ENCODE measurements at regions of chr1 and their contacts with region 1.

Region 1: DNA sequence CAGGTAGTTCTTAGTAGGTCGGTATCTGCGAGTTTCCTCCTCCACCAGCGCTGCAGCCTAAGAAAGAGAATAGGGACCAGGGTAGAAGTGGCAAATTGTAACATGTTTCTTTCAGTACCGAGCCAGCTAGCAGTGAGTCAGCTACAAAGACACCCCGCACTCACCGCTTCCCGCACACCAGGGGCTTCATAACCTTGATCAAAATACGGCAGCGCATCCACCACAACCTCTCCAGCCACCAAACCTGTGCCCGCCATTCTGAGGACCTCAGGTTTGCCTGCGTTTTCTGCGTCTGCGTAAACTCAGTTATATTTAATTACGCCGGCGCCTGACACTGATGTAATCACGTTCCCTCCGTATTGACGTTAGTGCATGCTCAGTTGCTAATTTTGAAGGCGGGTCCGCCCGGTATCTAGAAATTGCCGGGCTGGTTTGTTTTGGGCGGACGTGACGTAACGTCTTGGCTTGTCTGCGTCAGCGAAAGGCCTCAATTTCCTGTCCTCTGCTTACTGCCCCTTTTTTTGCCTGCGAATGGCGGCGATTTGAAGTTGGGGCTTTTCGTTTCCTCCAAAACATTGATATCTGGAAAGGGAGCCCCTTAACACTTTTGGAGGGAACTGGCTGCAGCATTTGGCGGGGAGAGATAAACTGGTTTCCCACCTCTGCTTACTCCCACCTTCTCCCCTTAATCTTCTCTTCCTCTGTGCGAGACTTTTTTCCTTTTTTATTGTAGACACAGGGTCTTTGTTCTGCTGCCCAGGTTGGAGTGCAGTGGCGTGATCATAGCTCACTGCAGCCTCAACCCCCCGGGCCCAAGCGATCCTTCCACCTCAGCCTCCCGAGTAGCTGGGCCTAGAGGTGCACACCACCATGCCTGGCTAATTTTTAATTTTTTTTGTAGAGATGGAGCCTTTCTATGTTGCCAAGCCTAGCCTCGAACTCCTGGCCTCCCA is at the start of gene BCAS2:
- DNase-seq: peak; percentile 98
- H3K4me3 Mint-ChIP-seq: peak within 1 kb of the TSS; percentile 85
- H3K27ac Mint-ChIP-seq: peak within 1 kb of the TSS; percentile 83
- H3K4me1 Mint-ChIP-seq: peaks cover 29% of the 10 kb centered on the region
- H3K27me3 Mint-ChIP-seq: no peaks in the 10 kb centered on the region
- total RNA-seq, gene BCAS2: 48.5 to 49.0 TPM

Region 2: GRCh38 chr1:114467488-114467887 is 114.1 kb before region 1 on chr1:
- CTCF ChIA-PET with region 1: no interaction called
- POLR2A ChIA-PET with region 1: no interaction called
- intact Hi-C with region 1: loop called (anchors 5 kb)
- DNase-seq: no peak
- H3K4me3 Mint-ChIP-seq: no peak overlapping the region
- H3K27ac Mint-ChIP-seq: peak overlapping the region; percentile 59
- H3K4me1 Mint-ChIP-seq: peaks cover 52% of the 10 kb centered on the region
- H3K27me3 Mint-ChIP-seq: no peaks in the 10 kb centered on the region

Region 3: GRCh38 chr1:114670083-114671010 is 88.7 kb after region 1 on chr1:
- CTCF ChIA-PET with region 1: no interaction called
- POLR2A ChIA-PET with region 1: no interaction called
- intact Hi-C with region 1: loop called (anchors 1 kb)
- DNase-seq: peak; percentile 92
- H3K4me3 Mint-ChIP-seq: peak overlapping the region; percentile 88
- H3K27ac Mint-ChIP-seq: no peak overlapping the region
- H3K4me1 Mint-ChIP-seq: peaks cover 7% of the 10 kb centered on the region
- H3K27me3 Mint-ChIP-seq: peaks cover 2% of the 10 kb centered on the region

Region 4: GRCh38 chr1:114780344-114781226 is 199.0 kb after region 1 on chr1 and contains the start of gene SIKE1:
- CTCF ChIA-PET with region 1: no interaction called
- POLR2A ChIA-PET with region 1: no interaction called
- intact Hi-C with region 1: loop called (anchors 1 kb)
- DNase-seq: peak; percentile 97
- H3K4me3 Mint-ChIP-seq: peak within 1 kb of the TSS; percentile 100
- H3K27ac Mint-ChIP-seq: peak within 1 kb of the TSS; percentile 100
- H3K4me1 Mint-ChIP-seq: peaks cover 23% of the 10 kb centered on the region
- H3K27me3 Mint-ChIP-seq: no peaks in the 10 kb centered on the region
- total RNA-seq, gene SIKE1: 60.4 to 66.7 TPM

Region 5: DNA sequence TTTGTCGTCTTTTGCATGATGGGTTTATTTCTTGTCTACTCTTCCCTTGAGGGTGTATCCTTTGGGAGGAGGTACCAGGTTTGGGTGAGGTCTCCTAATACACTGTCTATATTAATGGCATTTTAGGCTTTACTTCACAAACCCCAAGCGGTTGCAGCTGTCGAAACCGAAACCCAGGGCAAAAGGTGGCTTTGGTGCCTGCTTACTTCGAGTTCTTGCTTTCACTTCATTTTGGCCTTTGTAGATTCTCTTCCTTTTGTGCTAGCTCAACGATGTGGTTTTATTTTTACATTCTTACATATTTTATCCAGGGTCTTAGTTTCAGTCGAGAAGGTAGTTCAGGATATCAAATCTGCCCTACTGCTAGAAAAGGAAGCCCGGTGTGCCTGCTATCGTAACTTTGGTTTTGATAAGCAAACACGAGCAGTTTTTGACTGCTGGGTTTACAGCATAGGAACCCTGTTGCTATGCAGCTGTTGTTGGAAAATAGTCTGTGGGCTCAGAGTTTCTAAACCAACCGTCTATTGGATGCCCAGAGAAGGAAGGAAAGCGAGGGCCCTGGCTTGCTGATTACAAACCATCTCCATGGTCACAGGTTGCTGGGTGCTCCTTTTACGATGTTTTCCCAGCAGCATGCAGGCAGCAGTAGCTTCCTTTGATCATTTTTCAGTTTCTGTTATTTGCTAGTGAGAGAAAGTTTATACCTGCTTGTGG is 517.5 kb after region 1 on chr1:
- CTCF ChIA-PET with region 1: no interaction called
- POLR2A ChIA-PET with region 1: no interaction called
- intact Hi-C with region 1: loop called (anchors 10 kb)
- DNase-seq: peak; percentile 78
- H3K4me3 Mint-ChIP-seq: peak overlapping the region; percentile 80
- H3K27ac Mint-ChIP-seq: peak overlapping the region; percentile 85
- H3K4me1 Mint-ChIP-seq: peaks cover 47% of the 10 kb centered on the region
- H3K27me3 Mint-ChIP-seq: no peaks in the 10 kb centered on the region

Measured in activated CD4-positive, alpha-beta memory T cell treated with anti-CD3 and anti-CD28 coated beads for 36 hours (primary cell).